Lower leg skin (tissue), 4 donors: ENCODE measurements at regions of chr22 and their contacts with region 1.

Region 1: DNA sequence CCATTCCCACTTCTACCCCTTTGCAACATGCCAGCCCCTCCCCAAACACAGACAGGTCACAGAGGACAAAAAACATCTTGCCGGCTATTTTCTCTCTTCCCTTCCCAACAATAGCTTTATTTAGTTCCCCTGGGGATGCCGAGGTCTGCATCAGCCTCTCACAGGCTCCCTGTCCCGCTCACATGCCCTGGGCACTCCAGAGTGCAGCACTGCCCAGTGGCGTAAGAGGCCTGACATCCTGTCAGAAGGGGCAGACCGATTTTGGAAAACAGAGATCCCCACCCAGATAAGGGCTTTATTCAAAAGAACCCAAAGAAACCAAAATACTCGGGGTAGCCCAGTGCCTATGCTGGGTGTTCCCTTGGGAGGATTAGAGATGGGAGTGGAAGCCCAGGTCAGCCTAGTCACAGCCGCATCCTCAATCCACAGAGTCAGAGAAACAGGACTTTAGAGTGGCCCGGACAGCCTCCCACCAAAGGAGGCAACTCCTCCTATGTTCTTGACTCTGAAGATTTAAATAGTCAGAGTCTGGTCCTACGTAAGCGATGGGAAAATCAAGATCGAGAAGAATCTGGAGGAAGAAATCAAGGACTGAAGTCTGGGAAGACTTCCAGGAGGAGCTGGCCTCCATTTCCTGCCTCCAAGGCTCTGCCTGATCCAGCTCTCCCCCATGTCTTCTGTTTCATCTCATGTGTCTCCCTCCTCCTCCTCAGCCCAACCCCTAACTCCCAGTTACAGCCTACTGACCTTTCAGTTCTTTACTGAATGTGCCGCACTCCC is 129.2 kb downstream of the FBXO7 start:
- DNase-seq: no peak
- H3K4me3 ChIP-seq: no peak overlapping the region
- CTCF ChIP-seq: no peak
- POLR2A ChIP-seq: no peak

Region 2: GRCh38 chr22:32665676-32666075 is 61.8 kb after region 1 on chr22:
- intact Hi-C with region 1: loop called (anchors 2 kb)
- DNase-seq: no peak
- H3K4me3 ChIP-seq: no peak overlapping the region
- CTCF ChIP-seq: no peak
- POLR2A ChIP-seq: no peak

Region 3: GRCh38 chr22:32676196-32676595 is 72.3 kb after region 1 on chr22:
- intact Hi-C with region 1: no loop called
- DNase-seq: no peak
- H3K4me3 ChIP-seq: no peak overlapping the region
- CTCF ChIP-seq: no peak
- POLR2A ChIP-seq: no peak